ENCODE measurements at regions of chr11 and their contacts with region 1.

Region 1: DNA sequence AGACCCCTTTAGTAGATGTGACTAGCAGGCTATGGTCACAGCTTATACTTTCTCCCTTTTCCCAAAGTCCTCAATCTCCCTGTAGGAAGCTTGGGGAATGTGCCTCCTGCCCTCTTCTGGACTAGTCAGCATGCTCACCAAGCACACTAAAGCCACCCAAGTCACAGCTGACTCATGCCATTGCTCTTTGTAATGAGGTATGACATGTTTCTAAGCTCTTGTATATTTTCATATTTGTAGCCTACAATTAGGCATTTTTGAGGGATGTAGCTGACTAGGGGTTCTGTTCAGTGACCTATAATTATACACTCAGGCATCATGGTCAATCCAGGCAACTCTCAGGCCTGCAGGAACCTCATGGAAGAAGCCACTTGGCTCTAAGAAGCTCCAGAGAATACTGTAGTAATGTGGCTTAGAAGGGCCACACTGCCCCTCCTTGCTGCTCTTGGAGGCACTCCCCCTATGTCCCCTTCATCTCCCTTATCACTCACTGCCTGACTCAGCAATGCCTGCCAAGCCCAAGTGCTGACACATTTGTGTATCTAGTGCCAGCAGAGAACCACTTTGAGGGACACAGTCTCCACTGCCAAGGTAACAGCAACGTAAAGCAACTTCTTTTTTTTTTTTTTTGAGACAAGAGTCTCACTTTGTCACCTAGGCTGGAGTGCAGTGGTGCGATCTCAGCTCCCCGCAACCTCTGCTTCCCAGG is 86.2 kb downstream of the RPL27A start:
- DNase-seq: peak; percentile 89
- ATAC-seq: peak; percentile 68
- H3K4me3 ChIP-seq: no peak overlapping the region
- H3K27ac ChIP-seq: peak overlapping the region; percentile 66
- H3K4me1 ChIP-seq: peaks cover 49% of the 10 kb centered on the region
- H3K27me3 ChIP-seq: no peaks in the 10 kb centered on the region
- CTCF ChIP-seq: peak; percentile 50
- POLR2A ChIP-seq: no peak
- RAD21 ChIP-seq: peak; percentile 67

Region 2: DNA sequence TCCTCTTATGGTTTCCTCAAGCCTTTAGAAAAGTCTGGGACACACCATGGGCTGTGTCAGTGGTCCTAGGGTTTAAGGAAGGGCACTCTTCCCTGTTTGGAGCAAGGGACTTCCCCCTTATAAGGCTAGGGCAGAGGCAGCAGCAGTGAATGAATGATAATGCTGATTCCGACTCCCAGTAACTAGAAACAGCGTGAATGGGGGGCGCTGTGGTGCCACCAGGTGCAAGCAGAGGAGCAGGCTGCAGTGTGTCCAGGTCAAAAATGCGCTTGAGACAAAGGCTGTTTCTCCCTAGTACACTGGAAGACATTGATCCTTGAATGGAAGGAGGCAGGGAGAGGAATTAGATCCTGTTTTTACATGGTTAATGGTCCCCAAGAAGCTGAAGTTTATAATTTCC is 588.3 kb before region 1 on chr11:
- CTCF ChIA-PET with region 1: no interaction called
- POLR2A ChIA-PET with region 1: no interaction called
- dilution Hi-C with region 1: no loop called
- in situ Hi-C with region 1: no loop called
- intact Hi-C with region 1: no loop called
- DNase-seq: no peak
- ATAC-seq: no peak
- H3K4me3 ChIP-seq: no peak overlapping the region
- H3K27ac ChIP-seq: no peak overlapping the region
- H3K4me1 ChIP-seq: no peaks in the 10 kb centered on the region
- H3K27me3 ChIP-seq: peaks cover 8% of the 10 kb centered on the region
- CTCF ChIP-seq: no peak
- POLR2A ChIP-seq: no peak
- RAD21 ChIP-seq: no peak

Region 3: DNA sequence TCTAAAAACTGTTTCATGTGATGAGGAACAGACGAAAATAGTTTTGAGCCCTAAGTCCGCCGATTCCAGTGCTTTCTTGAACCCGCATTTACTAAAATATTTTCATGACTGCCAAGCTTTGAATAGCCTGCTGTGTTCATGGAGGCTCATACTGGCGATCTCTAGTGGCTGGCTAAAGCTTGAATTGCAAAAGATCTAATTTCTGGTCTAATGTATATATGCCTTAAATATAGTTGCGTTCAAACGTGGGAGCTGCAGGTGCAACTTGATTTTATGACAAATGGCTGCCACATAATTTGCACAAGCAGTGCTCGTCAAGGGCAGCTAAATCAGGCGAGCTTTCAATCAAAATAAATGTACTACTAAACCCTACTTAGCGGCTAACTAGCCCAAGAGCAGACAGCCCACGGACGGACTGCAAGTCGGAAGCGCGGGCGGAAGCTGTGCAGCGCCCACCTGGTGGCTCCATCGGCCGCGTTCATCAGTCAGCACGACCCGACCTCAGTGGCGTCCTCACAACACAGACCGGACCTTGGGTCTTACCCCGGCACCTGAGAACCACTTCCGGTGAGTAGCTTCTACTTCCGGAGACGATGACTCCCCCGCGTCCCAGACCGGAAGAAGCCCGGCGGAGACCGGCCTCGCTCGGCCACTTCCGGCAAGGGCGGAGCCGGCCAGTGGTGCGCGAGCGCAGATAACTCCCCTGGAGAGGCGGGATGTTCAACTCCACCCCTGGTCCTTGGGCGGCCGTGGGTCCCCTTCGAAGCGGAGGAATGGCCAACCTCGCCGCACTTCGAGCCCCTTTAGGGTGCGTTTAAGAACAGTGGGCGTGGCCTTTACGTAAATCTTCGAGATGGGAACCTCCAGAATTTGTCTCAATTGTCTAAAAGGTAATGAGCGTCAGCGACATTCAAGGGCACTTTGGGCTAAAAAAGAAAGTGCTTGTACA is 80.1 kb before region 1 on chr11:
- CTCF ChIA-PET with region 1: no interaction called
- POLR2A ChIA-PET with region 1: interaction called, 3 read pairs
- dilution Hi-C with region 1: no loop called
- in situ Hi-C with region 1: no loop called
- intact Hi-C with region 1: loop called (anchors 1 kb)
- DNase-seq: peak; percentile 96
- ATAC-seq: peak; percentile 89
- H3K4me3 ChIP-seq: peak overlapping the region; percentile 52
- H3K27ac ChIP-seq: peak overlapping the region; percentile 77
- H3K4me1 ChIP-seq: peaks cover 7% of the 10 kb centered on the region
- H3K27me3 ChIP-seq: no peaks in the 10 kb centered on the region
- CTCF ChIP-seq: peak; percentile 20; the same call in 1 of the 2 replicates
- POLR2A ChIP-seq: peak; percentile 80
- RAD21 ChIP-seq: peak; percentile 40

Measured in IMR-90 (cell line).